HepG2 (cell line): ENCODE measurements at regions of chr6 and their contacts with region 1.

Region 1: DNA sequence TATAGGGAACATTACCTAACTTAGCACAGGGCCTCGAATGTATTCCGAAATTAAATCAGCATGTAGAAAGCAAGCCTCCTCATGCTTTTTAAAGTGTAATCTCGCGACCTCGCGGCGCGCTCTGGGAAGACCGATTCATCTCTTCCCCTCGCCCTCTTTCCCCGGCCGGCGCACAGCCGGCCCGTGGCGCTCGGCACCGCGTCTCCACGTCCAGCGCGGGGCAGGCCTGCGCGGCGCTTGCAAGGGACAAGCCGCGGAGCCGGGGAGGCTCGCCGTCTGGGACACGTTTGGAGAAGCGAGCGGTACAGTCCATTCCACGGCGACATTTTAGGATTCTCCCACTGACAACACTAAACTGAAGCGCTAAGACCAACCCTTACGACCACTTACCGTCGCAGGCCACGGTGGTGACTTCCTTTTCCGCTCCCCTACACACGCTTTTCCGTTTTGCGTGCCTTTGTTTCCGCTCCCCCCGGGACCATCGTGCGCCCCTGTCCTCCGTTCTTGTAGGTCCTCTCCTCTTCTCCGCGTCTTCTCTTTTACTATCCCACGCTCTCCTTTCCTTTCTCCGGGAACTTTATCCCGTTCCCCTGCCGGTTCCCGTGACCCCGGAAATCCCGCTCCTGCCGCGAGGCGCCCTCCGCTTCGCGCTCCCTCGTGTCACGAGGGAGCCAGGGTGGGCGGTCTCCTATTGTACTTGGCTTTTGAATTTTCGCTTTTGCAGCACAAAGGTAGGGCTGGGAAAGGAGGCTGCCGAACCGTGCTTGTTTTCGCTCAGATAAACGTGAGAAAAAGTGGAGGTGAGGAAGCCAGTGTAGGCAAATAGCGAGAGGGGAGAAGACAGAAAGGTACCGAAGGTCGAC is at the start of gene ECHDC1:
- DNase-seq: peak; percentile 70
- ATAC-seq: peak; percentile 86
- H3K4me3 ChIP-seq: peak within 1 kb of the TSS; percentile 88 to 92 (median 90)
- H3K27ac ChIP-seq: peak within 1 kb of the TSS; percentile 86
- H3K4me1 ChIP-seq: peaks cover 62% of the 10 kb centered on the region
- H3K27me3 ChIP-seq: no peaks in the 10 kb centered on the region; a peak in 1 of 5 replicates
- CTCF ChIP-seq: peak; percentile 12; the same call in 1 of the 2 replicates
- EP300 ChIP-seq: 0 out of 4 replicates have a peak, but pooled peaks have one; percentile 14 to 19
- POLR2A ChIP-seq: peak; percentile 94
- RAD21 ChIP-seq: no peak; the same call in 1 of the 2 replicates
- total RNA-seq, gene ECHDC1: 98.1 and 143 TPM in 2 replicates

Region 2: GRCh38 chr6:127247114-127248096 is 95.8 kb before region 1 on chr6:
- CTCF ChIA-PET with region 1: no interaction called
- POLR2A ChIA-PET with region 1: no interaction called
- in situ Hi-C with region 1: no loop called
- intact Hi-C with region 1: no loop called
- DNase-seq: no peak
- ATAC-seq: no peak
- H3K4me3 ChIP-seq: no peak overlapping the region
- H3K27ac ChIP-seq: no peak overlapping the region
- H3K4me1 ChIP-seq: no peaks in the 10 kb centered on the region
- H3K27me3 ChIP-seq: no peaks in the 10 kb centered on the region
- CTCF ChIP-seq: no peak
- EP300 ChIP-seq: no peak
- POLR2A ChIP-seq: no peak
- RAD21 ChIP-seq: no peak

Region 3: DNA sequence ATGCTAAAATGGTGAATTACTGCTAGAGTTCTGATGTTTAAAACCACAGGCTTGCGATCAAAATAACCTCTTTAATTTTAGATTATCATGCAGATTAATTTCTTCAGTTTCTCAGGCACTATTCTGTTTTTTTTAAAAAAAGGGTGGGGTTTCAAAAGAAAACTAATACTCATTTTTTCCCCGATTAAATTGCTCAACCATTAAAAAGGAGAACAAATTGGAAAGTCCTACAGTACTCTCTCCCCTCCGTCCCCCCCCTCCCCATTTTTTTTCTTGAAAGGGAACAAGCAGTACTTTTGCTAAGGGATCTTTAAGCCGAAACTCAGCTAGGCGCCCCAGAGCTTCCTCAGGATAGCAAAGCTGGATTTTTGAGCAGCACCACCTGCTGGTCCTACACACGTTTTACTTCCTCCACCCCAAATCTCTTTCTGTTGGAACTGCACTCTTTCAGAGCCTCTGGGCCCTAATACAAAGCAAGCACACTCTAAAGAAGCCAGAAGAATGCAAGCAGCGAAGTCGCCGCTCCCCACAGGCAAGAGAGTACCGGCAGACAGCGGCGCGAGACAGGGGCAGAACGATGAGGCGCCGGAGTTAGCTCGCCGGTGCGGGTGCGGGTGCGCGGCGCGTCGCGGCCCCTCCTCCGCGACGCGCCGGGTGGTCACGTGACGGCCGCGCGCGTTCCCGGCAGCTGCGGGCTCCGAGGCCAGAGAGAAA is 76.8 kb before region 1 on chr6 and contains the start of gene RNF146:
- CTCF ChIA-PET with region 1: no interaction called
- POLR2A ChIA-PET with region 1: interaction called, 37 read pairs
- in situ Hi-C with region 1: no loop called
- intact Hi-C with region 1: loop called (anchors 2 kb)
- DNase-seq: peak; percentile 81
- ATAC-seq: peak; percentile 85
- H3K4me3 ChIP-seq: peak within 1 kb of the TSS; percentile 87 to 97 (median 95)
- H3K27ac ChIP-seq: peak within 1 kb of the TSS; percentile 91
- H3K4me1 ChIP-seq: peaks cover 34% of the 10 kb centered on the region
- H3K27me3 ChIP-seq: no peaks in the 10 kb centered on the region; a peak in 1 of 5 replicates
- CTCF ChIP-seq: peak; percentile 92
- EP300 ChIP-seq: no peak
- POLR2A ChIP-seq: no peak
- RAD21 ChIP-seq: peak; percentile 49; the same call in 1 of the 2 replicates
- total RNA-seq, gene RNF146: 18.8 and 22.2 TPM in 2 replicates

Region 4: DNA sequence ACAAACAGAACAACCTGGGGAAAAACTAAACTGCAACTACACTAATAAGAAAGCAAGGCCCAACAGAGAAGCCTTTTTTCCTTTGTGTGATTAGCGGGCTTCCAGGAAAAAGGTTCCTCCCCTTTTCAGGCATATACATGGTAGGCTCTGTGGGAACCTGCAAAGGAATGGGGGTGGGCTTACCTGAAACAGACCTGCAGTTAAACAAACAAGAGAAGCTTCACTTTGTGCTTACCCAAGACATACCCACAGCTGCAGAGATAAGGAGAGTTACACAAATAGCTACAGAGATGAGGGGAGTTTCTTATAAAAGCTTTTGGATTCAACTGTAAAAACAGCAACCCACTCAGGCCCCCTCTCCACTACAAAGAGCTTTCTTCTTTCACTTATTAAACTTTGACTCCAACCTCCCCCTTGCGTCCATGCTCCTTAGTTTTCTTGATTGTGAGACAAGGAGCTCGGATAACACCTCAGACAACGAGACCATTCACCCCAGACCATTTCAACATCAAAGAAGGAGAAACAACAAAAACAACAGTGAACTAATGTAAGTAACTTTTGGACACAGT is 45.6 kb before region 1 on chr6:
- CTCF ChIA-PET with region 1: no interaction called
- POLR2A ChIA-PET with region 1: interaction called, 13 read pairs
- in situ Hi-C with region 1: no loop called
- intact Hi-C with region 1: loop called (anchors 2 kb)
- DNase-seq: peak; percentile 90
- ATAC-seq: peak; percentile 93
- H3K4me3 ChIP-seq: peak overlapping the region in 1 of 3 experiments; percentile 18; a peak in 1 of 6 replicates
- H3K27ac ChIP-seq: peak overlapping the region; percentile 54
- H3K4me1 ChIP-seq: peaks cover 22% of the 10 kb centered on the region
- H3K27me3 ChIP-seq: no peaks in the 10 kb centered on the region
- CTCF ChIP-seq: no peak
- EP300 ChIP-seq: peak in 1 of 2 experiments; percentile 63; a peak in 2 of 4 replicates
- POLR2A ChIP-seq: no peak
- RAD21 ChIP-seq: no peak

Region 5: DNA sequence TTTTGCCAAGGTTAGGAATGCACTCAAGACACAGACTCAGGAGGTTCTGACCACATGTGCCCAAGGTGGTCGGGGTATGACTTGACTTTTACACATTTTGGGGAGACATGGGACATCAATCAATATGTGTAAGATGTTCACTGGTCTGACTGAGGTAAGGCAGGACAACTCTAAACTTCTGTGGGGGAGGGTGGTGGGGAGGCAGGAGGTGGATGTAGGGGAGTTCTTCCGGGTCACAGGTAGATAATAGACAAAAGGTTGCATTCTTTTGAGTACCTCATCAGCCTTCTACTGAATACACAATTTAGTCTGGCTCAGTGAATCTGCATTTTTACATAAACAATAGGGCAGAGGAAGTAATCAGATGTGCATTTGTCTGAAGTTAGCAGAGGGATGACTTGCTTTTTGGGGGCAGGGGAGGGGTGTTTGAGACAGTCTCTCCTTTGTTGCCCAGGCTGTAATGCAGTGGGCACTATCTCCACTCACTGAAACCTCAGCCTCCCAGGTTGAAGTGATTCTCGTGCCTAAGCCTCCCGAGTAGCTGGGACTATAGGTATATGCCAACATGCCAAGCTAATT is 10.7 kb before region 1 on chr6:
- CTCF ChIA-PET with region 1: no interaction called
- POLR2A ChIA-PET with region 1: interaction called, 10 read pairs
- in situ Hi-C with region 1: no loop called
- intact Hi-C with region 1: no loop called
- DNase-seq: no peak
- ATAC-seq: peak; percentile 30
- H3K4me3 ChIP-seq: no peak overlapping the region
- H3K27ac ChIP-seq: no peak overlapping the region
- H3K4me1 ChIP-seq: peaks cover 11% of the 10 kb centered on the region
- H3K27me3 ChIP-seq: no peaks in the 10 kb centered on the region
- CTCF ChIP-seq: no peak
- EP300 ChIP-seq: no peak
- POLR2A ChIP-seq: no peak
- RAD21 ChIP-seq: no peak

Region 6: GRCh38 chr6:127420556-127420955 is 77.4 kb after region 1 on chr6:
- CTCF ChIA-PET with region 1: no interaction called
- POLR2A ChIA-PET with region 1: no interaction called
- in situ Hi-C with region 1: no loop called
- intact Hi-C with region 1: loop called (anchors 1 kb)
- DNase-seq: peak; percentile 89
- ATAC-seq: peak; percentile 99
- H3K4me3 ChIP-seq: no peak overlapping the region
- H3K27ac ChIP-seq: no peak overlapping the region
- H3K4me1 ChIP-seq: peaks cover 6% of the 10 kb centered on the region; the same call in 1 of the 2 replicates
- H3K27me3 ChIP-seq: no peaks in the 10 kb centered on the region
- CTCF ChIP-seq: peak; percentile 87
- EP300 ChIP-seq: peak in 1 of 2 experiments; percentile 14; a peak in 1 of 4 replicates
- POLR2A ChIP-seq: no peak
- RAD21 ChIP-seq: peak; percentile 45; the same call in 1 of the 2 replicates

Region 7: DNA sequence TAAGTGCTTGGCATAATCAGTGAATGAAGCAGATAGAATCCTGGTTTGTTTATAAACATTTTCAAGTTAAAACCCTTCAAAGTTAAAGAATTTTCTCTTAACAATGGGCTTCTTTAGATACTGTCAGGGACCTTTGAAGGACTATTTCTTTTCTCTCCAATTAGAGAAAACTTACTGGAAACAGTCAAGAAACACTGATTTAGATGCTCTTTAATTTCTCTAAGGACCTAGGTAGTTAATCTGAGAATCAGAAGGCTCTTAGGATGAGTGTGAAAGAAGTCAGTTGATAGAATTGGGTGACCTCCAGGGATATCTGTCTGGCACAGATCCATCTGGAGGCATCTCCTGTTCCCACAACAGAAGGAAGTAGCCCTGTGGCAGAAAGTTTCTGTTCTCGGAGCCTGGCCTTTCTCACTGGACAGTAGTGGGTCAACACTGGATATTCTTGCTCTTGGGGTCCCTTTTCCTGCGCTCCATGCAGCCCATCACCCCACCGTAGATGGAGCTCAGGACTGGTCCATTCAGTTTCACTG is 93.5 kb after region 1 on chr6:
- CTCF ChIA-PET with region 1: no interaction called
- POLR2A ChIA-PET with region 1: no interaction called
- in situ Hi-C with region 1: no loop called
- intact Hi-C with region 1: no loop called
- DNase-seq: no peak
- ATAC-seq: no peak
- H3K4me3 ChIP-seq: no peak overlapping the region
- H3K27ac ChIP-seq: no peak overlapping the region
- H3K4me1 ChIP-seq: no peaks in the 10 kb centered on the region
- H3K27me3 ChIP-seq: no peaks in the 10 kb centered on the region
- CTCF ChIP-seq: no peak
- EP300 ChIP-seq: no peak
- POLR2A ChIP-seq: no peak
- RAD21 ChIP-seq: no peak